Sigmoid colon (tissue), 7 donors: ENCODE measurements at regions of chr2 and their contacts with region 1.

Region 1: DNA sequence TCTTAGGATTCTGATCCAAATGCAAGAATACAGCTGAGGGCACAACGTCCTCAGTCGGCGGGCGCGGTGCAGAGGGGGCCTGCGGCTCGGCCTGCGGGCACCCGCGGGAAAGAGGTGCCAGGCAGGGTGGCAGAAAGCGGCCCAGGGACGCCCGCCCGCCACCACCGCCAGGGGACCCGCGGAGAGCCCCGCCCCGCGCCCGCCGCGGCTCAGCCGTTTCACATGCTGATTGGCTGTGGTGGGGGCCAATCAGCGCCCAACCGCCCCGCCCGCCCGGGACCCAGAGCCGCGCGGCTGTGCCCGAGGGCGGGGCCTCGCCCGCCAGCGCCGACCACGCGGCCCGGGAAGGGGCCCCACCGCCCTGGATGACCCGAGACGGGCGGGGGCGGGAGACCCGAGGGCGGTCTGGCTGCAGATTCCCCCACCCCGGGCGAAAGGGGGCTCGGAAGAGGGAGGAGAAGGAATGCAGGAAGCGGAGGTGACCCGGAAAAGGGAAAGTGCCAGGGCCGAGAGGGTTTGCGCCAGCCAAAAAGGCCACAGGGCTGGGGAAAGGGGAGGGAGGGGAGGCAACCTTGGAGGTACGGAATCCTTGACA is 8.0 kb downstream of the IRS1 start:
- DNase-seq: peak; percentile 95
- H3K4me3 ChIP-seq: peak overlapping the region; percentile 61 to 85 (median 72)
- H3K27ac ChIP-seq: peak overlapping the region; percentile 89 to 97 (median 96)
- H3K4me1 ChIP-seq: peaks cover 0 to 84% (median 62%) of the 10 kb centered on the region in 4 donors
- H3K27me3 ChIP-seq: no peaks in the 10 kb centered on the region
- CTCF ChIP-seq: peak; percentile 11 to 66 (median 59)
- EP300 ChIP-seq: no peak
- POLR2A ChIP-seq: no peak

Region 2: DNA sequence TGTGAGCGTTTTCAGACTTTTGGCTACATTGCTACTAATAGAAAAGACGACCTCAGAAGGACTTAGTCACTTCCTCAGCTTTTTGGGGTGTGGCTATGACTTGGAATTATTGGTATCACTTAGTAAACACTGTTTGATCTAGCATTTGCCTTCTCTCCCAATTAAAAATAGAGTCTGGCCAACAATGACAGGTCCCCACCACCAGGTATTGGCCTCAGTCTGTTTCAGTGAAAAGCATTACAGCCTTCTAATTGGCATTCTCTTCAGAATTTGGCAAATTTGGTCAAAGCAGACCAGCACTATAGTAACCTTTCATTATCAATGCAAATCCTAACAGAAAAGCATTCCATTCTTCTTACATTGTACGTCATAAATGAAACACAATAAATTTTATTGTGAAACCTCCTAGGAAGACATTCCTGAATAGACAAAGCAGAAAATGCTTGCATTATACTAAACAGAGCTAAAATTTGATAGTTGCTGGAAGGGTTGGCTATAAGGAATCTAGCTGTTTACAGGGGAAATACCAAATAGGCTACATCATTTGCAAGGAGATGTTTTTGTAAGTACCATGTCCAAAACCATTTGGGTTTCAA is 605.9 kb before region 1 on chr2:
- intact Hi-C with region 1: loop called (anchors 10 kb)
- DNase-seq: no peak
- H3K4me3 ChIP-seq: no peak overlapping the region
- H3K27ac ChIP-seq: peak overlapping the region; percentile 7 to 76 (median 54)
- H3K4me1 ChIP-seq: peaks cover 0 to 42% (median 35%) of the 10 kb centered on the region in 4 donors
- H3K27me3 ChIP-seq: no peaks in the 10 kb centered on the region
- CTCF ChIP-seq: no peak
- EP300 ChIP-seq: peak in 1 of 4 donors; percentile 88
- POLR2A ChIP-seq: no peak

Region 3: DNA sequence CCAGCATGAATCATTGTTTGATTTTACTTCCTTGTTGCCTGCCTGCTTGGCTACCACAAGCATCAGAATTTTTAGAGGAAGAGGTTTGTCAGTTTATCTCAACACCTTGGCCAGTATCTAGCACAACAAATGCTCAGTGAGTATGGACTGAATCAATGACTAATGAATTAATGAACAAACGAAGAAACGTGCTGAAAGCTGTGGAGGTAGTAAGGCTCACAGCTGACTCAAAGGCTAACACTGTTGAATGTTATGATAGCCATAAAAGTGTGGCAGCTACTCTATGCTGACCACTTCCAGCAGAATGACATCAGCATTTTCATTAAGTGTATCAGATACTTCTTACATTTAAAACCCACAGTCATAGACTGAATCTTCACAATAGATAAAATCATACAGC is 535.3 kb before region 1 on chr2:
- intact Hi-C with region 1: loop called (anchors 10 kb)
- DNase-seq: no peak
- H3K4me3 ChIP-seq: no peak overlapping the region
- H3K27ac ChIP-seq: peak overlapping the region in 3 of 4 donors; percentile 27 to 48 (median 28)
- H3K4me1 ChIP-seq: peaks cover 0 to 19% (median 8%) of the 10 kb centered on the region in 4 donors
- H3K27me3 ChIP-seq: no peaks in the 10 kb centered on the region
- CTCF ChIP-seq: no peak
- EP300 ChIP-seq: no peak
- POLR2A ChIP-seq: no peak

Region 4: GRCh38 chr2:226631671-226632070 is 159.9 kb before region 1 on chr2:
- intact Hi-C with region 1: loop called (anchors 1 kb)
- DNase-seq: peak; percentile 90
- H3K4me3 ChIP-seq: no peak overlapping the region
- H3K27ac ChIP-seq: peak overlapping the region; percentile 39 to 84 (median 82)
- H3K4me1 ChIP-seq: peaks cover 0 to 29% (median 22%) of the 10 kb centered on the region in 4 donors
- H3K27me3 ChIP-seq: no peaks in the 10 kb centered on the region
- CTCF ChIP-seq: no peak
- EP300 ChIP-seq: peak; percentile 98 to 100 (median 98)
- POLR2A ChIP-seq: no peak

Region 5: GRCh38 chr2:226649871-226650660 is 141.5 kb before region 1 on chr2:
- intact Hi-C with region 1: loop called (anchors 5 kb)
- DNase-seq: peak; percentile 88
- H3K4me3 ChIP-seq: no peak overlapping the region
- H3K27ac ChIP-seq: peak overlapping the region; percentile 66 to 81 (median 75)
- H3K4me1 ChIP-seq: peaks cover 0 to 27% (median 19%) of the 10 kb centered on the region in 4 donors
- H3K27me3 ChIP-seq: no peaks in the 10 kb centered on the region
- CTCF ChIP-seq: no peak
- EP300 ChIP-seq: peak in 2 of 4 donors; percentile 21 to 45
- POLR2A ChIP-seq: no peak

Region 6: DNA sequence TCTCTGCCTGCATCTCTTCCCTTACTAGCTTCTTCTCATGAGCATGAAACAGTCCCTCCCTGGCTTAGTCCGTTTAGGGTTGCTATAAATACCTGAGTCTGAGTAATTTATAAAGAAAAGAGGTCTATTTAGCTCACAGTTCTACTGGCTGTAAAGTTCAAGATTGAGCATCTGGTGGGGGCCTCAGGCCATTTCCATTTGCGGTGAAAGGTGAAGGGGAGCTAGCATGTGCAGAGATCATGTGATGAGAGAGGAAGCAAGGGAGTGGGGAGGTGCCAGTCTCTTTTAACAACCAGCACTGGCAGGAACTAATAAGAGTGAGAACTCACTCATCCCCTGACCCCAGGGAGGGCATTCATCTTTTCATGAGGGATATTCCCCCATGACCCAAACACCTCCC is 71.0 kb after region 1 on chr2:
- intact Hi-C with region 1: no loop called
- DNase-seq: no peak
- H3K4me3 ChIP-seq: no peak overlapping the region
- H3K27ac ChIP-seq: no peak overlapping the region
- H3K4me1 ChIP-seq: peaks cover 0 to 9% (median 0%) of the 10 kb centered on the region in 4 donors
- H3K27me3 ChIP-seq: no peaks in the 10 kb centered on the region
- CTCF ChIP-seq: no peak
- EP300 ChIP-seq: no peak
- POLR2A ChIP-seq: no peak